Heart left ventricle (tissue), 16 donors: ENCODE measurements at regions of chr5 and their contacts with region 1.

Region 1: GRCh38 chr5:87267574-87268125 is at the start of gene RASA1:
- DNase-seq: peak; percentile 95 to 98 (median 96)
- ATAC-seq: peak; percentile 96 to 98 (median 98)
- H3K4me3 ChIP-seq: peak within 1 kb of the TSS; percentile 74 to 97 (median 90)
- H3K27ac ChIP-seq: peak within 1 kb of the TSS; percentile 82 to 96 (median 92)
- H3K4me1 ChIP-seq: peaks cover 0 to 43% (median 15%) of the 10 kb centered on the region in 12 donors
- H3K27me3 ChIP-seq: no peaks in the 10 kb centered on the region
- CTCF ChIP-seq: no peak
- POLR2A ChIP-seq: peak in 1 of 2 donors; percentile 92
- total RNA-seq, gene RASA1: 13.5 to 21.9 (median 18.2) TPM

Region 2: DNA sequence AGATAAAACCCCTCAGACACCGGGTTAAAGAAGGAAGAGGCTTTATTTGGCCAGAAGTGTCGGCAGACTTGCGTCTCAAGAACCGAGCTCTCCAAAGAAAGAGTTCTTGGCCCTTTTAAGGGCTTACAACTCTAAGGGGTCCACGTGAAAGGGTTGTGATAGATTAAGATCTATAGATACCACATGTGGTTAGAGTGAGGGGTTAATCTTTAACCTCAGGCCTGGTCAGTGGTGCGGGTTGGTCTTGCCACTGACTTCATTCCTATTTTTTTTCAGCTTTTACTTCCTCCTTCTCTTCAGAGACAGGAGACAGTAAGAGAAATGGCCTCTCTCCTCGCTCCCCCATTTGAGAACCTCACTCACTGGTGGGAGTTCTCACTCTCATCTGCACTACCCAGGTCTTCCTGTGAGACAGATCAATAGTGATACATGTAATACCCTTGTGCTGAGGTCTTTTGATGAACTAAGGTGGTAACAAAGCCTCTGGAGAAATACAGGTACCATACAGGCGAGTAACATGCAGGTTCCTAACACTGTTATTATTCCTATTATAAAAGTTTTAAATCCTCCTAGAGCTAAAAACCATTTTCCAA is 702.4 kb before region 1 on chr5:
- intact Hi-C with region 1: no loop called
- DNase-seq: no peak
- ATAC-seq: no peak
- H3K4me3 ChIP-seq: no peak overlapping the region
- H3K27ac ChIP-seq: no peak overlapping the region
- H3K4me1 ChIP-seq: no peaks in the 10 kb centered on the region
- H3K27me3 ChIP-seq: no peaks in the 10 kb centered on the region
- CTCF ChIP-seq: no peak
- POLR2A ChIP-seq: no peak

Region 3: DNA sequence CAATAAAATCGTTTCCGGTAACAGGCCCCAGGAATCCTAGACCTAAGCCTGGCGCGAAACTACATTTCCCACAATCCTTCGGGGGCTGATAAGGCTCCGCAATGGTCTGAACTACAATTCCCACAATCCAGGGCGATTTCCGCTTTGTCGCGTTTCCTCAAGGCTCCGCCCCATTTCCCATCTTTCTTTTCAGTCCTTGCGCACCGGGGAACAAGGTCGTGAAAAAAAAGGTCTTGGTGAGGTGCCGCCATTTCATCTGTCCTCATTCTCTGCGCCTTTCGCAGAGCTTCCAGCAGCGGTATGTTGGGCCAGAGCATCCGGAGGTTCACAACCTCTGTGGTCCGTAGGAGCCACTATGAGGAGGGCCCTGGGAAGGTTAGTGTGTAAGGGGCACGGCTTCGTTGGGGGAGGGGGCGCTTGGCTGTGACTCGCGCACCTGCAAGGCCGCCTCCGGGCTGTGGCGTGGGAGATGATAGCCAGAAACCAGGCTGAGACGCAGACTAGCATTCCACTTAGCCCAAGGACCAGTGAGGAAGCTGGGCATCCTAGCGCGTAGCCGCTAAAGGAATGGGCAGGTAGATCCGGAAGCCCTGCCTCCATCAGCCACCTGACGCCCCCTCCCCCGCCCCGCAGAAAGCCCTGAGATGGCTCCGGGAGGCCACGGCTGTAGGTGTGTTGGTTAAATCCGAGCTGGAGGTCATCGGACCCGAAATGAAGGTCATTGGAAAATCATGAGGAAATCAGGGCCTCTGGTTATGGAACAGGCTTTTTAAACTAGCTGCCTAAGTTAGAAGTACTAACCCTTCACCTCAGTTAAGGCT is 649.7 kb before region 1 on chr5 and contains the start of gene COX7C:
- intact Hi-C with region 1: loop called in 1 of 10 experiments (anchors 5 kb)
- DNase-seq: peak; percentile 87 to 94 (median 93)
- ATAC-seq: peak; percentile 98 to 99 (median 99)
- H3K4me3 ChIP-seq: peak within 1 kb of the TSS; percentile 74 to 98 (median 92)
- H3K27ac ChIP-seq: peak within 1 kb of the TSS; percentile 92 to 98 (median 96)
- H3K4me1 ChIP-seq: peaks cover 0 to 14% (median 11%) of the 10 kb centered on the region in 12 donors
- H3K27me3 ChIP-seq: peaks cover 0 to 3% (median 0%) of the 10 kb centered on the region in 9 donors
- CTCF ChIP-seq: no peak
- POLR2A ChIP-seq: peak; percentile 19 to 85
- total RNA-seq, gene COX7C: 1,038 to 2,399 (median 1,758) TPM

Region 4: GRCh38 chr5:87339986-87340385 is 72.3 kb after region 1 on chr5:
- intact Hi-C with region 1: no loop called
- DNase-seq: no peak
- ATAC-seq: no peak
- H3K4me3 ChIP-seq: no peak overlapping the region
- H3K27ac ChIP-seq: peak overlapping the region in 2 of 12 donors; percentile 7 to 11
- H3K4me1 ChIP-seq: peaks cover 0 to 24% (median 0%) of the 10 kb centered on the region in 12 donors
- H3K27me3 ChIP-seq: no peaks in the 10 kb centered on the region
- CTCF ChIP-seq: no peak
- POLR2A ChIP-seq: no peak

Region 5: DNA sequence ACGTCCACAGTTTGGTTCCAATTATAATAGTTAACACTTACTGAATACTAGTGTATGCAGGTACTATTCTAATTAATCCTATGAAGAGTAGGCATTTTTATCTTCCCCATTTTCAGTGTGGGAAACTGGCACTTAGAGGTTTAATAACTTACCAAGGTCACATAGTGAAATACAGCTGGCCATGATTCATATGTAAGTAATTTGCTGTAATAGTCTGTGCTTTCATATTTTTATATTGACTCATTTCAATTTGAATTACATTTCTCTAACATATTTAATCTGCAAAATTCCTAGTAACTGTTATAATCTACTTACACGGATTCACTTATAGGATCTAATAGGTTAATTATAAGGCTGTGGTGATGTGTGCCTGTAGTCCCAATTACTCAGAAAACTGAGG is 125.7 kb after region 1 on chr5:
- intact Hi-C with region 1: loop called in 2 of 10 experiments (anchors 10 kb)
- DNase-seq: no peak
- ATAC-seq: peak in 1 of 4 donors; percentile 59
- H3K4me3 ChIP-seq: no peak overlapping the region
- H3K27ac ChIP-seq: peak overlapping the region in 2 of 12 donors; percentile 4 to 25
- H3K4me1 ChIP-seq: peaks cover 0 to 13% (median 4%) of the 10 kb centered on the region in 12 donors
- H3K27me3 ChIP-seq: no peaks in the 10 kb centered on the region
- CTCF ChIP-seq: no peak
- POLR2A ChIP-seq: no peak

Region 6: GRCh38 chr5:87412630-87413342 is 145.1 kb after region 1 on chr5 and contains the start of gene CCNH:
- intact Hi-C with region 1: loop called in 7 of 10 experiments (anchors 1 to 10 kb)
- DNase-seq: peak; percentile 97 to 99 (median 99)
- ATAC-seq: peak; percentile 99 to 100 (median 100)
- H3K4me3 ChIP-seq: peak within 1 kb of the TSS; percentile 20 to 96 (median 87)
- H3K27ac ChIP-seq: peak within 1 kb of the TSS; percentile 80 to 99 (median 97)
- H3K4me1 ChIP-seq: peaks cover 0 to 34% (median 14%) of the 10 kb centered on the region in 12 donors
- H3K27me3 ChIP-seq: no peaks in the 10 kb centered on the region
- CTCF ChIP-seq: no peak
- POLR2A ChIP-seq: peak; percentile 79 to 92
- total RNA-seq, gene CCNH: 22.2 to 41.3 (median 23.3) TPM